Activated naive CD4-positive, alpha-beta T cell treated with anti-CD3 and anti-CD28 coated beads for 36 hours (primary cell): ENCODE measurements at regions of chr6 and their contacts with region 1.

Region 1: DNA sequence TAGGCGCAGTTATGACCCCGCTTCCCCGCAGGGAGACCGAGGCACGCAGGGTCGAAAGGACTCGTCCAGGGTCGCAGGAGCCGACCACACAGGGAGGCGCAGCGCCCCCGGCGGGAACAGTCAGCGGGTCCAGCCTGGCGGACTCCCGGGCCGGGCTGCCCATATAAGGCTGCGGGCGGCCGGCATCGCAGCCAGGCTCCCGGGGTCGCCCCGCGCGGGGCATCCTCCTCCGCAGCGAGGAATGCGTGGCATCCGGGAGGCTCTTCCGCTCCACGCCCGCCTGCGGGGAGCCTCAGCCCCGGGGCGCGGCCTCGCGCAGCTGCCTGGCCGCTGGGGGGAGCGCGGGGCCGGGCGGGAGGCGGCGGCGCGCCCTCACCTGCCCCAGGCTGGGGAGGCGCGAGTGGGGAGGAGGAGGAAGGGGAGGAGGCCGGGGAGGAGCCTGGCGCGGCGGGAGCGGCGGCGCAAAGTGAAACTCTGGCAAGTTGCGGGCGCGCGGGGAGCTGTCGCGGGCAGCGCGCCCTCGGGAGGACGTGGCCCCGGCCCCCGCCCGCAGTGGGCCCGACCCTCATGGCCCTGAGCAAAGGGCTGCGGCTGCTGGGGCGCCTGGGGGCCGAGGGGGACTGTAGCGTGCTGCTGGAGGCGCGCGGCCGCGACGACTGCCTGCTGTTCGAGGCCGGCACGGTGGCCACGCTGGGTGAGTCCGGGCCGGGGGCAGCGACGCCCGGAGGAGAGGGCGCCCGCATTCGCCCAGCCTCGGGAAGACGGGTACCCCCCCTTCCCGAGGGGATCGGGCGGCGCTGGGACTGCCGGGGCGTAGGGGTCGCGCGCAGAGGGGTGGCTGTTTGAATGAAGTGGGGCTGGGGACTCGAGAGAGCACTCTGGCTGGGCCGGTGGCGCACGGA is at the start of gene SYNJ2:
- DNase-seq: peak; percentile 88
- H3K4me3 Mint-ChIP-seq: peak within 1 kb of the TSS; percentile 88
- H3K27ac Mint-ChIP-seq: peak within 1 kb of the TSS; percentile 83
- H3K4me1 Mint-ChIP-seq: peaks cover 34% of the 10 kb centered on the region
- H3K27me3 Mint-ChIP-seq: no peaks in the 10 kb centered on the region
- total RNA-seq, gene SYNJ2: 42.4 to 42.7 TPM

Region 2: GRCh38 chr6:157620566-157621343 is 360.9 kb before region 1 on chr6:
- CTCF ChIA-PET with region 1: no interaction called
- intact Hi-C with region 1: no loop called
- DNase-seq: no peak
- H3K4me3 Mint-ChIP-seq: no peak overlapping the region
- H3K27ac Mint-ChIP-seq: no peak overlapping the region
- H3K4me1 Mint-ChIP-seq: no peaks in the 10 kb centered on the region
- H3K27me3 Mint-ChIP-seq: no peaks in the 10 kb centered on the region

Region 3: DNA sequence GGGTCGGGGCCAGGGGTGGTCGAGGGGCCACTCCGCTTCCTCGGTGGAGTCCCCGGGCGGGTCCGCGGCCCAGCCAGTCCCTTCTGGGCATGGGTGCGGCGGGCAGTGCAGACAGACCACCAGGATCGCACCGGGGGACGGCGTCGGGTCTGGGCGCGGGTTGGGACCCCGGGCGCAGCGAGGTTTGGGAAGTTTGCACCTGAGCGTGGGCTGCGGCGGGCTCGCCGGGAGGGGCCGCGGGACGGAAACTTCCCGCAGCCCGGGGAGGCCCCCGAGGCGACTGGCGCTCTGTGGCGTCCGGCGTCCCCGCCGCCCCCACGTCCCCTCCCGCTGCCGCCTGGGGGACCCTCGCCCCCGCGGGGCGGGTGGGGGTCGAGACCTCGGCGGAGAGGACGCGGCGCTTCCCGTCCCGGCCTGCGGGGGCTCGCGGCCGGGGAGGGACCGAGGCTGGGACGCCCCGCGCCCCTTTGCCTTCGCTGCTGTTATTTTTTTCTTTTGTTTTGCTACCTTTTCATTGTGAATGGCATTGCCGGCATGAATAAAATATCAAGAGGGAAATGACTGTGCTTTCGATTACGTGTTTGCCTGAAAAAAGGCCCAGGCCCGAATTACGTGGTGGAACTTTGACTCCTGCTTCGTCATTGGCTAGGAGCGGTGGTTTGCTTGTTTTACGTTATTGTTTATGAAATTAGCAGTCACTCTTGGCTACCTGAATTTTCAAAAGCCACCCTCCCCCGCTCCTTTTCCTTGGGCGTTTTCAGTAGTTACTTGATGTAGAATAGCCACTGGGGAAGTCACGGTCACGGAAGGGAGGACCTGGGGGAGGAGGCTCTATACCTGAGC is 157.9 kb before region 1 on chr6:
- CTCF ChIA-PET with region 1: no interaction called
- intact Hi-C with region 1: loop called (anchors 2 kb)
- DNase-seq: peak; percentile 96
- H3K4me3 Mint-ChIP-seq: peak overlapping the region; percentile 80
- H3K27ac Mint-ChIP-seq: peak overlapping the region; percentile 96
- H3K4me1 Mint-ChIP-seq: peaks cover 42% of the 10 kb centered on the region
- H3K27me3 Mint-ChIP-seq: peaks cover 4% of the 10 kb centered on the region

Region 4: GRCh38 chr6:157912326-157912725 is 69.3 kb before region 1 on chr6:
- CTCF ChIA-PET with region 1: no interaction called
- intact Hi-C with region 1: no loop called
- DNase-seq: no peak
- H3K4me3 Mint-ChIP-seq: no peak overlapping the region
- H3K27ac Mint-ChIP-seq: no peak overlapping the region
- H3K4me1 Mint-ChIP-seq: peaks cover 19% of the 10 kb centered on the region
- H3K27me3 Mint-ChIP-seq: no peaks in the 10 kb centered on the region

Region 5: DNA sequence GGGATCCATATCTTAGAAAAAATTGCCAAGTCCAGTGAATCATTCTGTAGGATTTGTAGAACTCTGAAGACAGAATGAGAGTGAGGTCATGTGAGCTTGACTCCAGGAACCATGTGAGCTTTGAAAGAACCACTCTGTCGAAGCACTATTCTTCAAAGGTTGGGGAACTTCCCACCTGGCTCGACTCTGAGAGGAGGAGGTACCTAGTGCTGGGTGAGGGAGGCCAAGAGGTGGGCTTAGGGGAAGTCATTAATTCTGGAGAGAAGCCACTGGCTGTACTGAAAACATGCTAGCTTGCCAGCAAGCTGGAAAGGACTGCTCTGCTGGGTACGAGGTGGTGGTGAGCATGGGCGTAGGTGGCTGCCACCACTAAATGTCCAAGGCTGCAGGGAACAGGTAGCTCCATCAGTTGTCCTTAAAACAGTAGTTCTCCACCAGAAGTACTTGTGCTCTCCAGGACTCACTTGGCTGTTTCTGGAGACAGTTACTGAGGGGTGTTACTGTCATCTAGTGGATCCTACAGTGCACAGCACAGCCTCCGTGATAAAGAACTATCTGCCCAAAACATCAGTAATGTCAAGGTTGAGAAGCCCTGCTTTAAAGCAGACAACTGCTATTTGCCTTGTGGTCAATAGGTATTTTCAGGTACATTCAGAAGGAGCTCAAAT is 34.6 kb before region 1 on chr6:
- CTCF ChIA-PET with region 1: interaction called, 4 read pairs
- intact Hi-C with region 1: loop called (anchors 2 kb)
- DNase-seq: peak; percentile 57
- H3K4me3 Mint-ChIP-seq: no peak overlapping the region
- H3K27ac Mint-ChIP-seq: no peak overlapping the region
- H3K4me1 Mint-ChIP-seq: peaks cover 30% of the 10 kb centered on the region
- H3K27me3 Mint-ChIP-seq: no peaks in the 10 kb centered on the region

Region 6: DNA sequence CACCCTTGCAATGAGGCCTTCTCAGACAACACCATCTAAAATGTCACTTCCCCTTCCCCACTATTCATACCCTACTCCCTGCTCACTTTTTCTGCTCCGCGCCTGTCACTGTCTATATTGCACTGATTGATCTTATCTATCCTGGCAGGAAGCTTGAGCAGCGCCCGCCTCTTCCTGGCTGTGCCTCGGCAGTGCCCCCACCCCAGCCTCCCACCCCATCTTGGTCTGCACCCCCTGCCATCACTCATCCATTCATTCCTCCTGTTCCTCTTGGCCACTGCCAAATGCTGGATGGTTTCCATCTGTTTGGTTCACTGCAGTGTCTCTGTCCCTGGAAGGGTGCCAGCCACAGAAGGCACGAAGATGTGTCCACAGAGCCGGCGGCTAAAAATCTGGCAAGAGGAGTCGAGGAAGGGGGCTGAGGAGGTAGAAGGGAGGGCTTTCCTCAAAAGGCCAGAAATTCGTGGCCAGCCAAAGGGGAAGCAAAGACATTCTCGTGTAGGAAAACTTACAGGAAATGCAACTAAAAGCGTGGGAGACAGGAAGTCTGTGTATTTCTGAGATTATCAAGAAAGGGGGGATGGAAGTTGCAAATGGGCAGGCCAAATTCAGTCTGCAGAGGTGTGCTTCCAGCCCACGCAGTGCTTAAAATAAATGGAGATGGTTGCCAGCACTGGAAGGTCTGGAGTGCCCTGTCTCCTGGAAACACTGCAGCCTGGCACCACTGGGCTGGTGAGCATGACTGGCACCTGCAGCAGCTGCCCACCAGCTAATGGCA is 27.7 kb after region 1 on chr6:
- CTCF ChIA-PET with region 1: interaction called, 4 read pairs
- intact Hi-C with region 1: loop called (anchors 1 kb)
- DNase-seq: peak; percentile 51
- H3K4me3 Mint-ChIP-seq: peak overlapping the region; percentile 42
- H3K27ac Mint-ChIP-seq: peak overlapping the region; percentile 77
- H3K4me1 Mint-ChIP-seq: peaks cover 80% of the 10 kb centered on the region
- H3K27me3 Mint-ChIP-seq: no peaks in the 10 kb centered on the region

Region 7: DNA sequence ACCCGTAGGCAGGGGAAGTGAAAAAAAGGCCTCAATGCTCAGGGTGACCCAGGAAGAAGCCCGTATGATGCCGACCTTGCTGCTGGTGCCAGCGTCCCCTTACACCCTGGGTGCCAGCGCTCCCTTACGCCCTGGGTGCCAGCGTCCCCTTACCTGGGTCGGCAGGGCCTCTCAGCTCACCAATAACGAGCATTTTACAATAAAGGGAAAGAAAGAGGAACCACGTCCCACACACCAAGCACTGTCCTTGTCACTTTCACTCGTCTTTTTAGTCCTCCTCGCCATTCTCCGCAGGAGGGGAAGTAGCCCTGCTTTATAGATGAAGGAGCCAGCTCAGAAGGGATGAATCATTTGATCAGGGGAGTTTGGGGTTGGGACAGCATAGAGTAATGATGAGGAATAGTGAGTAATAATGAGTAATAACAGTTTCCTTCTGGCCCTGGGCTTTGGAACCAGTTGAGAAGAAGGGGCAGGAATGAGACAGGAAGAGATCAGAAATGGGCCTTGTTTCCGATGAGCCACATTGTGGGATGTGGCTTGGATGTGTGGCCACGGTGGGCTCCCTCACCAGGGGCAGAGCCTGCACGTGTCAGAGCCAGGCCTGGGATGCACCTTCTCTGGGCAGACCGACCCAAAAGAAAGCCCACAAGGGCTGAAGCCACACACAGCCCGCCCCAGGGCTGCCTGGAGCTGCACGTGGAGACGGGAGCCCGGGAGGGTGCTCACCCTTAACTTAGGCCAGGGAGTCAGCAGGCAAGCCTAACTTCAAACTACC is 75.8 kb after region 1 on chr6:
- CTCF ChIA-PET with region 1: interaction called, 4 read pairs
- intact Hi-C with region 1: loop called (anchors 1 kb)
- DNase-seq: peak; percentile 77
- H3K4me3 Mint-ChIP-seq: no peak overlapping the region
- H3K27ac Mint-ChIP-seq: peak overlapping the region; percentile 25
- H3K4me1 Mint-ChIP-seq: peaks cover 54% of the 10 kb centered on the region
- H3K27me3 Mint-ChIP-seq: no peaks in the 10 kb centered on the region

Region 8: GRCh38 chr6:158168040-158168289 is 186.3 kb after region 1 on chr6 and contains the start of gene SERAC1:
- CTCF ChIA-PET with region 1: no interaction called
- intact Hi-C with region 1: loop called (anchors 5 kb)
- DNase-seq: no peak
- H3K4me3 Mint-ChIP-seq: peak within 1 kb of the TSS; percentile 91
- H3K27ac Mint-ChIP-seq: peak within 1 kb of the TSS; percentile 94
- H3K4me1 Mint-ChIP-seq: peaks cover 26% of the 10 kb centered on the region
- H3K27me3 Mint-ChIP-seq: no peaks in the 10 kb centered on the region
- total RNA-seq, gene SERAC1: 3.1 to 4.8 TPM